HCT116 (cell line): ENCODE measurements at regions of chr18 and their contacts with region 1.

Region 1: GRCh38 chr18:63155169-63155852 is 164.3 kb downstream of the BCL2 start:
- DNase-seq: peak; percentile 62
- ATAC-seq: peak; percentile 98
- H3K4me3 ChIP-seq: peak overlapping the region; percentile 33 to 49
- H3K27ac ChIP-seq: no peak overlapping the region
- H3K4me1 ChIP-seq: peaks cover 5 to 11% of the 10 kb centered on the region in 2 experiments; a peak in 3 of 4 replicates
- H3K27me3 ChIP-seq: 0 out of 2 replicates have a peak, but pooled peaks cover 15% of the 10 kb centered on the region
- CTCF ChIP-seq: peak; percentile 41 to 94 (median 90); a peak in 5 of 6 replicates
- POLR2A ChIP-seq: no peak
- RAD21 ChIP-seq: peak; percentile 51; the same call in 1 of the 2 replicates

Region 2: GRCh38 chr18:63111671-63112402 is 43.5 kb before region 1 on chr18:
- CTCF ChIA-PET with region 1: no interaction called
- POLR2A ChIA-PET with region 1: no interaction called
- RAD21 ChIA-PET with region 1: no interaction called
- intact Hi-C with region 1: no loop called
- DNase-seq: no peak
- ATAC-seq: no peak
- H3K4me3 ChIP-seq: no peak overlapping the region
- H3K27ac ChIP-seq: no peak overlapping the region
- H3K4me1 ChIP-seq: no peaks in the 10 kb centered on the region
- H3K27me3 ChIP-seq: no peaks in the 10 kb centered on the region; the same call in 1 of the 2 replicates
- CTCF ChIP-seq: no peak
- POLR2A ChIP-seq: no peak
- RAD21 ChIP-seq: no peak

Region 3: DNA sequence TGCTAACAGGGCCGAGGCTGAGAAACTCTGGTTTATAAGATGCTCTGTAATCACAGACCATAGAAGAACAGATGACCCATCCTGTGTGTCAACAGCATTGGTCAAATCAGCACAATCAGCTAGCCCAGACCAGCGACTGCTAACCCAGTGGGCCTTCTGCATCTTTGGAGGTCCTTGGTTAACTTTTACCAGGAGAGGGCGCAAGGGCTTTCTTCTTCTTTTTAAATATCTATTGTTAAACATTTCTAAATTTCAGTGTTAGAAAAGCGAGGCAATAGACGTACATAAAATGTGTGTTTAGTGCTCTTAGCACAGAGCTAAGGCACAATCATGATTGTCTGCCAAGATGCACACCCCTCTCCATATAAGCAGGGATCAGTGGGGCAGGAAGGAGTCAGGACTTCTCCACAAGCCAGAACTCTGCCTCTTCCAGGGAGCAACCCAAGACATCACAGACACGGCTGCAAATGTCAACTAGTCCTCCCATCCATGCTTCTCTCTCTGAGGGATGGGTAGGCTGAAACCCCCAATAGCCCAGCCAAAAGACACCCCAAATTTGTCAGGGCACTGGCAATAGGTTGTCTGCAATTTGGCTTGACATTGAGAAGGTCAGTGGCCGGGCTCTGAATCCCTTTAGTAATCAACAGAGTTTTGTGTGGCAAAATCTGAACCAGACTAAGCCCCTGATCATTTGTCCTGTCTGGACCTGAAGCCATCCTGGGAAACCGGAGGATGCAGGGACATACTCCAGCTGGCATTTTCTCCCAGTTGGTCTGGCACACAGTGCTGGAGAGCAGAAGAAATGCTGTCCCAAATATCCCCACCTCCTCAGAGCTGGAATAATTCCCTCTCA is 24.0 kb before region 1 on chr18:
- CTCF ChIA-PET with region 1: interaction called, 3 read pairs
- POLR2A ChIA-PET with region 1: no interaction called
- RAD21 ChIA-PET with region 1: no interaction called
- intact Hi-C with region 1: loop called (anchors 2 kb)
- DNase-seq: no peak
- ATAC-seq: peak; percentile 77
- H3K4me3 ChIP-seq: no peak overlapping the region
- H3K27ac ChIP-seq: no peak overlapping the region
- H3K4me1 ChIP-seq: no peaks in the 10 kb centered on the region
- H3K27me3 ChIP-seq: peaks cover 4% of the 10 kb centered on the region; the same call in 1 of the 2 replicates
- CTCF ChIP-seq: peak; percentile 42 to 62 (median 52)
- POLR2A ChIP-seq: no peak
- RAD21 ChIP-seq: peak; percentile 65

Region 4: DNA sequence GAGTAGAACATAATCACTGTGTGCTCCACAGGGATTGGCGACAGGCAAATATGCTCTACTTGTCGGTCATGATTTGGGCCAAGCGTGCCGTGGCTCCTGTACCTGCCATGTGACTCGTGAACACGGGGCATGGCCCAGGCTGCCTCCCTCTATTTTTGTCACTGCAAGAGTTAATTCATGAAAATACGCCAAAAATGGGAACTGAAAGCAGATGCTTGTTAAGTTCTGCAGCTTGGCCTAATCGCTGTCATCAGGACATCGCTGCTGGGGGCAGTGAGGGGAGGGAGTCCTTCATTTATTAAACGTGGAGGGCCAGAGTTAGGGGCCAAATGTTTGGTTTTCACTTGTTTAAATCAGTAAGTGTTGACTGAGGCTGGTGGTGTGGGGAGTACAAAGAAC is 13.5 kb before region 1 on chr18:
- CTCF ChIA-PET with region 1: no interaction called
- POLR2A ChIA-PET with region 1: no interaction called
- RAD21 ChIA-PET with region 1: no interaction called
- intact Hi-C with region 1: no loop called
- DNase-seq: no peak
- ATAC-seq: no peak
- H3K4me3 ChIP-seq: no peak overlapping the region
- H3K27ac ChIP-seq: no peak overlapping the region
- H3K4me1 ChIP-seq: no peaks in the 10 kb centered on the region
- H3K27me3 ChIP-seq: peaks cover 2% of the 10 kb centered on the region; the same call in 1 of the 2 replicates
- CTCF ChIP-seq: no peak
- POLR2A ChIP-seq: no peak
- RAD21 ChIP-seq: no peak